CD8-positive, alpha-beta T cell (primary cell): ENCODE measurements at regions of chr12 and their contacts with region 1.

Region 1: DNA sequence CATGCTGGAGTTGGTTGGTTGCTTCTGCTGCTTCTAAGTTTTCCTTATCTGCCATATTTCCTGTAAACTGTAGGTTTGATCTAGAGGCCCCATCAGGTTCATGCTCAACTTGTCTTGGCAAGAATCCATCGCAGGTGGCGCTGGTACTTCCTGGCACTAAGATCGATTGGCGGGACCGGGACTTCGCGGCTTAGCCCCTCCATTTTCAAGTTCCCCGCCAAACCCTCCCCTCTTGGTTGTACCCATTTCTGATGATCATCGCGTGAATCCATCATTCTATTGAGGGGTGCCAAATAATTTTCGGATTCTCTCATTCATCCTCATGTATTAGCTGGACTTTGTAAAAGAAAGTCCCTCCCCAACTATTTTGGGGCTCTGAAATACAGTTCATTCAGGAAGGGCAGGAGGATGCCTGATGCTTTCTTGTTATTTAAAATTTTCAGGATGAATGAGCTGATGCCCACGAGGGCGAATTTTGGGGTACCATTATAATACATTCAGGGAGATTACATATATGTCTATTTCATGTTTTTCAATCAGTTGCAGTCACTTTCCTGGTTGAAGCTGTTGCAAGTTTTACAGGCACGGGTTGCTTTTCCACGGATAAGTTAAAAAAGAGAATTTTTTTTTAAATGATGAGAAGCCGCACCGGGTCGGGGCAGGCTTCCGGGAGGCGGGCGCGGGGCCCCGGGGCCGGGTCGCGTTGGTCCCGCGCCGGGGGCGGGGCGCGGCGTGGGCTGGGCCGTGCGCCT is 395 bp upstream of the BRI3BP start:
- DNase-seq: peak; percentile 63 to 94 (median 82)
- ATAC-seq: peak; percentile 63
- H3K4me3 ChIP-seq: peak overlapping the region; percentile 47 to 67
- H3K4me3 Mint-ChIP-seq: peak overlapping the region; percentile 90
- H3K27ac ChIP-seq: peak overlapping the region; percentile 17 to 54
- H3K27ac Mint-ChIP-seq: peak overlapping the region; percentile 33
- H3K4me1 ChIP-seq: peaks cover 20% of the 10 kb centered on the region
- H3K4me1 Mint-ChIP-seq: peaks cover 34% of the 10 kb centered on the region
- H3K27me3 ChIP-seq: no peaks in the 10 kb centered on the region
- H3K27me3 Mint-ChIP-seq: no peaks in the 10 kb centered on the region
- CTCF ChIP-seq: peak; percentile 68

Region 2: GRCh38 chr12:124191024-124191359 is 802.1 kb before region 1 on chr12:
- CTCF ChIA-PET with region 1: no interaction called
- POLR2A ChIA-PET with region 1: no interaction called
- intact Hi-C with region 1: no loop called
- DNase-seq: no peak
- ATAC-seq: no peak
- H3K4me3 ChIP-seq: no peak overlapping the region
- H3K4me3 Mint-ChIP-seq: no peak overlapping the region
- H3K27ac ChIP-seq: no peak overlapping the region
- H3K27ac Mint-ChIP-seq: no peak overlapping the region
- H3K4me1 ChIP-seq: no peaks in the 10 kb centered on the region
- H3K4me1 Mint-ChIP-seq: no peaks in the 10 kb centered on the region
- H3K27me3 ChIP-seq: no peaks in the 10 kb centered on the region
- H3K27me3 Mint-ChIP-seq: no peaks in the 10 kb centered on the region
- CTCF ChIP-seq: no peak

Region 3: DNA sequence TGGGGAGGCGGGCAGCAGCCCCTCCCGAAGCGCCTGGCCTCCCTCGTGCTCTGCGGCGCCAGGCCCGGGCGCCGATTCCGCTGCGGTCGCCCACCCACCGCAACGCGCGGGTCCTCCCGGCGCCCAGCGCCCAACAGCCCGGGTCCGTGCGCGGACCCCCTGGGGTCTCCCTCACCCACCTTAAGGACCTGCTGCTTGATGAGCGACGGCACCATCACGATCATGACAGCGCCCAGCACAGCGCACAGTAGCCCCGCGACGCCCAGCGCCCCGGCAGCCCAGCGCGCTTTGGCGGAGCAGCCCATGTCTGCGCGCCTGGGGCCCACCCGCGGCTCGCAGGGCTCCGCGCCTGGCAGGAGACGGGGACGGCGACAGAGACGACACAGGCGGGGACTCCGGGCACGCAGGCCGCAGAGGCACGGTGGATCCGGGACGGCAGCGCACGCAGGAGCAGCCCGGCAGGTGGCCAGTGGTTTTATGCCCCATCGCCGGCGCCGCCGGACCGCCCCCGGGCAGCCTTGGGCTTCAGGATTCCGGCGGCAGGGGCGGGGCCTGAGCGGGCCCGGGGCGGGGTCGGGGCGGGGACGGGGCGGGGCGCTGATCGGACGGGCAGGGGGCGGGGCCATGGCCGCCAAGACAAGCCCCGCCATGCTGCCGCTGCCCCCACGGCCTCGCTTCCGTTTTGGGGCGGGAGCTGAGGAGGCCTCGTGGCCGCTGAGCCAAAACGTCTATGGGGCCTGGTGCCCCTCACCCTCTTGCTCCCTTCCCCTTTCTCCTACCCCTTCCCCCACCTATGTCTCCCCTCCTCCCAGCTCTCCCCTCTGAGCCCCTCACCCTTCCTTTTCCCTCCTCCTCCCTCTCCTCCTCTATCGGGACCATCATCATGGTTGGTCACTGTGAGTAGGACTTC is 129.4 kb before region 1 on chr12 and contains the start of gene SCARB1:
- CTCF ChIA-PET with region 1: no interaction called
- POLR2A ChIA-PET with region 1: no interaction called
- intact Hi-C with region 1: loop called in 1 of 2 experiments (anchors 2 kb)
- DNase-seq: peak; percentile 63 to 89 (median 73)
- ATAC-seq: peak; percentile 94
- H3K4me3 ChIP-seq: peak within 1 kb of the TSS; percentile 46 to 81
- H3K4me3 Mint-ChIP-seq: peak within 1 kb of the TSS; percentile 81
- H3K27ac ChIP-seq: peak within 1 kb of the TSS; percentile 15 to 46
- H3K27ac Mint-ChIP-seq: peak within 1 kb of the TSS; percentile 57
- H3K4me1 ChIP-seq: peaks cover 15% of the 10 kb centered on the region
- H3K4me1 Mint-ChIP-seq: peaks cover 23% of the 10 kb centered on the region
- H3K27me3 ChIP-seq: no peaks in the 10 kb centered on the region
- H3K27me3 Mint-ChIP-seq: no peaks in the 10 kb centered on the region
- CTCF ChIP-seq: no peak
- total RNA-seq, gene SCARB1: 3.0 to 3.2 TPM

Region 4: GRCh38 chr12:124917135-124917840 is 75.8 kb before region 1 on chr12:
- CTCF ChIA-PET with region 1: interaction called, 5 read pairs
- POLR2A ChIA-PET with region 1: interaction called, 3 read pairs
- intact Hi-C with region 1: loop called (anchors 1 kb)
- DNase-seq: peak; percentile 79 to 98 (median 91)
- ATAC-seq: peak; percentile 73
- H3K4me3 ChIP-seq: peak overlapping the region; percentile 31 to 40
- H3K4me3 Mint-ChIP-seq: peak overlapping the region; percentile 82
- H3K27ac ChIP-seq: peak overlapping the region; percentile 87 to 89
- H3K27ac Mint-ChIP-seq: peak overlapping the region; percentile 97
- H3K4me1 ChIP-seq: peaks cover 62% of the 10 kb centered on the region
- H3K4me1 Mint-ChIP-seq: peaks cover 87% of the 10 kb centered on the region
- H3K27me3 ChIP-seq: no peaks in the 10 kb centered on the region
- H3K27me3 Mint-ChIP-seq: no peaks in the 10 kb centered on the region
- CTCF ChIP-seq: no peak

Region 5: DNA sequence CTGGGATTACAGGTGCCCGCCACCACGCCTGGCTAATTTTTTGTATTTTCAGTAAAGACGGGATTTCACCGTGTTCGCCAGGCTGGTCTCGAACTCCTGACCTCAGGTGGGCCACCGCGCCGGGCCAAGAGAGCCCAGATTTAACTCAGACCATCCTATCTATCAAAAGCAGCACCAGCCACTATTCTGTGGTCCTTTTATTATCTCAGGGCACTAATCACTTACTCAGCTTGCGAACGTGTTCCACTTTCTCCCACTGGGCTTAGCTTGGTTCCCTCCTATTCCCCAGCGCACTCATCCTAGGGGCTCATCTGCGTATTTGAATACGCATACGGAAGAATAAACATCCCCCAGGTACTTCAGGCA is 56.0 kb after region 1 on chr12:
- CTCF ChIA-PET with region 1: interaction called, 4 read pairs
- POLR2A ChIA-PET with region 1: no interaction called
- intact Hi-C with region 1: loop called (anchors 1 kb)
- DNase-seq: no peak
- ATAC-seq: no peak
- H3K4me3 ChIP-seq: peak overlapping the region; percentile 75 to 99
- H3K4me3 Mint-ChIP-seq: peak overlapping the region; percentile 86
- H3K27ac ChIP-seq: peak overlapping the region; percentile 43 to 71
- H3K27ac Mint-ChIP-seq: peak overlapping the region; percentile 83
- H3K4me1 ChIP-seq: no peaks in the 10 kb centered on the region
- H3K4me1 Mint-ChIP-seq: peaks cover 8% of the 10 kb centered on the region
- H3K27me3 ChIP-seq: no peaks in the 10 kb centered on the region
- H3K27me3 Mint-ChIP-seq: no peaks in the 10 kb centered on the region
- CTCF ChIP-seq: no peak

Region 6: DNA sequence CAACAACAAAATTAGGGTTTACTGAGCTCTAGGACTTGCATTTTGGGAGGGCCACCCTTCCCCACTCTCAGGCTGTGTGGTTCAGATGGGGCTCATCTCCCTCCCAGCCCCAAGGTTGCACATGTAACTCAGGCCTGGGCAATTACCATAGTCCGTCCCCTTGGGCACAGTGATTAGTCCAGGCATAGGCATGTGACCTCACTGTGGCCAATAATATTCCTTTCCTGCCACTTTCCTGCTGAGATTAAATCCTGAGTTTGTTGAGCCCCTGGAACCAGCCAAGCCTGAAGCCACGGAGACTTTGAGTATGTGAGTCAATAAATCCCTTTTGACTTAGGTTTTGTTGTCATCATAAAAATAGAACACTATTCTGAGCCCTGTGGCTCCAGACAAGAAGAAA is 185.2 kb after region 1 on chr12:
- CTCF ChIA-PET with region 1: no interaction called
- POLR2A ChIA-PET with region 1: no interaction called
- intact Hi-C with region 1: no loop called
- DNase-seq: no peak
- ATAC-seq: no peak
- H3K4me3 ChIP-seq: no peak overlapping the region
- H3K4me3 Mint-ChIP-seq: no peak overlapping the region
- H3K27ac ChIP-seq: no peak overlapping the region
- H3K27ac Mint-ChIP-seq: no peak overlapping the region
- H3K4me1 ChIP-seq: peaks cover 2% of the 10 kb centered on the region
- H3K4me1 Mint-ChIP-seq: peaks cover 1% of the 10 kb centered on the region
- H3K27me3 ChIP-seq: peaks cover 0 to 6% of the 10 kb centered on the region in 2 experiments
- H3K27me3 Mint-ChIP-seq: peaks cover 44% of the 10 kb centered on the region
- CTCF ChIP-seq: no peak